Lower leg skin (tissue), 4 donors: ENCODE measurements at regions of chr7 and their contacts with region 1.

Region 1: GRCh38 chr7:30308389-30308788 is 24.0 kb downstream of the ZNRF2 start:
- DNase-seq: no peak
- H3K4me3 ChIP-seq: no peak overlapping the region
- CTCF ChIP-seq: no peak
- POLR2A ChIP-seq: no peak

Region 2: DNA sequence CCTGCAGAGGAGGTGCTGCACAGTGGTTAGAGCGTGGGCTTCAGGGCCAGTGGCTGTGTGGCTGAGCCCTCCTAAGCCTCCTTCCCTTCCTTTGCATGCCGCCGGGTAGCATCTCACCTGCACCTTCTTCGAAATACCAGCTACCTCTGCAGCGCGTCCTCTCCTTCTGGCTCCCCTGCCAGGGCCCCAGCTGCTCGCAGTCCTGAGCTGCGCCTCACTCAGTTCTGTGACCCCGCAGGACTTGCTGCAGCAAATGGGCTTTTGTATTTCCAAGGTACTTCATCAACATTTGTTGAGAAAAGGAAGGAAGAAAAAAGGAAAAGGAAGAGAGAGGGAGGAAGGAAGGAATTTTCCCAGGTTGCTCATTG is 891.5 kb before region 1 on chr7:
- intact Hi-C with region 1: loop called (anchors 5 kb)
- DNase-seq: no peak
- H3K4me3 ChIP-seq: no peak overlapping the region
- CTCF ChIP-seq: no peak
- POLR2A ChIP-seq: no peak

Region 3: GRCh38 chr7:30968747-30969603 is 660.6 kb after region 1 on chr7:
- intact Hi-C with region 1: loop called (anchors 5 kb)
- DNase-seq: peak; percentile 7 to 70
- H3K4me3 ChIP-seq: no peak overlapping the region
- CTCF ChIP-seq: no peak
- POLR2A ChIP-seq: no peak